Gastrocnemius medialis (tissue), 4 donors: ENCODE measurements at regions of chr3 and their contacts with region 1.

Region 1: DNA sequence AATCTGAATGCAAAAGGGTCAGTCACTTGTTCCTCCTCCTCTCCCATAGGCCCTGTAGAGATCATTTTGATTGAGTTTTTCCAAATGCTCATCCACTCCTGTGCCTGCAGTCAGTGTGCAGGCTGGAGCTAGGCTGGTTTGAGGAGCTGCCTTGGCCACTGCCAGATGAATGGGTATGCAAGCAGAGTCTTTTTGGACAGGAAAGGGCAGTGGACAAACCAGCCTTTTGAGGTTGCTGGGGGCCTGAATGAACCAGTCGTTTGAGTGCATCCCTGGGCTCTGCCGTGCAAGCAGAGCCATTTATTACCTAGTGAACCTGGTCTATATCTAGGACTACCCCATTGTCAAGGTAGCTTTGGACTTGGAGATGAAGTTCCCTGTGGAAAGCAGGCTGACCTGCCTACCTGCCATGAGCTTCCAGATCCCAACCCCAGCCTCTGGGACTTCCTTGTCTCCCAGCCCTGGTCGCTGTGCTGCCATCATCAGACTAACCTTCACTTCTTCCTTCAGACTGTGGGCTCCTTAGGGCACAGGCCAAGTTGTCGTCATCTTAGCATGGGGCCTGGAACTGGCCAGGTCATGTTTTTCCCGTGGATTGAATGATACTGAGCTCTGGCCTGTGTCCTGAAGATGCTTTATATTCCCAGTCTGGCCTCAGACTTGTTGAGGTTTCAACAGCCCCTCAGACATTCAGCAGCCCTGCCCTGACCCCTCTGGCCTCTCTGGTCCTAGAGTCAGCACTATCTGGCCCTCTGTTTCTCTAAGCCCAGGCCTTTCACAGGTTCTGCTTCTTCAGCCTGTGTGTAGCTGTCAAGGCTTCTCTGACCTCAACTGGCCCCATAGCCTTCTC is 55.5 kb upstream of the PRR23C start:
- DNase-seq: no peak
- ATAC-seq: no peak
- H3K4me3 ChIP-seq: no peak overlapping the region
- H3K27ac ChIP-seq: no peak overlapping the region
- H3K4me1 ChIP-seq: no peaks in the 10 kb centered on the region
- H3K27me3 ChIP-seq: no peaks in the 10 kb centered on the region
- CTCF ChIP-seq: no peak
- POLR2A ChIP-seq: no peak

Region 2: DNA sequence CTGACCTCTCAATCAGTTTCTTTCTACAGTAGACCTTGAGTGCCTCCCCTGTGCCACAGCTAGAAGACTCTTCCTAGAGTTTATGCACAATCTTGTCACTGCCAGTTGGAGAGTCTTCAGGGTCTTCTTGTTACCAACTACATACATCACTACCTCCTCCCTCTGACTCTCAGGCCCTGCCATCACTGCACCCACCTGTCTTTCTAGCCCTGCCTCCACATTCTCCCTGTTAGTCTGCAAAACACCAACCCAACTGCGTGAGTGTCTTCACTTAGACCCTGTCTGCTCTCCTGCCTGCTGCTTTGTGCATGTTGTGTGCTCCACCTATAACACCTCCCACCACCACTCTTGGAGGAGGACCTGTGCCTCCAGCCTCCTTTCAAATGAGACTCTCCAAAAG is 869.2 kb after region 1 on chr3:
- in situ Hi-C with region 1: no loop called
- intact Hi-C with region 1: loop called (anchors 10 kb)
- DNase-seq: no peak
- ATAC-seq: no peak
- H3K4me3 ChIP-seq: no peak overlapping the region
- H3K27ac ChIP-seq: no peak overlapping the region
- H3K4me1 ChIP-seq: no peaks in the 10 kb centered on the region
- H3K27me3 ChIP-seq: no peaks in the 10 kb centered on the region
- CTCF ChIP-seq: no peak
- POLR2A ChIP-seq: no peak